ENCODE measurements at regions of chr18 and their contacts with region 1.

Region 1: GRCh38 chr18:6920099-6920899 is 190.8 kb downstream of the ARHGAP28 start:
- DNase-seq: no peak
- ATAC-seq: peak; percentile 23

Region 2: GRCh38 chr18:6096730-6097129 is 823.6 kb before region 1 on chr18:
- intact Hi-C with region 1: no loop called
- DNase-seq: no peak
- ATAC-seq: no peak

Region 3: GRCh38 chr18:6543330-6543908 is 376.9 kb before region 1 on chr18:
- intact Hi-C with region 1: no loop called
- DNase-seq: no peak
- ATAC-seq: no peak

Region 4: GRCh38 chr18:6648581-6648980 is 271.7 kb before region 1 on chr18:
- intact Hi-C with region 1: no loop called
- DNase-seq: no peak
- ATAC-seq: no peak

Region 5: GRCh38 chr18:7177116-7177744 is 256.9 kb after region 1 on chr18:
- intact Hi-C with region 1: loop called (anchors 5 kb)
- DNase-seq: no peak
- ATAC-seq: peak; percentile 81